Endothelial cell of umbilical vein (primary cell): ENCODE measurements at regions of chr18 and their contacts with region 1.

Region 1: DNA sequence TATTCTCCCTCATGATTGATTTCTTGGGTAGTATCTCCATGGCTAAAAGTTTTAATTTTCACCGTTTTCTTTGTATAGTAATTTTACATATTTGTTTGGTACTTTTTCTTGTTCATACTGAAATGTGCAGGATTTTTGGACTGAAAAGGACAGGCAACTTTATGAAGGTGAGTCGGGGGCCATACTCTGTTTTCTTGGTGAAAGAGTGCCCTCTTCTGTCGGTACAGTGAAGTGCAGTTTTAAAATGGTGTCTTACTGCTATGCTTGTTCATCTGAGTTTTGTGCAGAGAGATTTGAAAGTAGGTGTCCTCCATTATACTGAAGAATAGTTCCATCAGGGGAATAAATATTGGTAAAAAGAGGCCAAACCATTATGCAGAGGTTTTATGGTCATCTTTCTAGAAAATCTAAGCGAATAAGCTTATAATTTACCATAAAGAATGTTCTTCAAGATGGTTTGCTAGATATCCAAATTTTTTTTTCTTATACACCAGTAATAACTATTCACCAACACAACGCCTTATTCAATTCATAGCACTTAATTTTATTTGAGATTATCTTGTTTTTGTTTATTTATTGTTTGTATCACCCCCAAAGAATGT is 8.7 kb upstream of the SERPINB13 start:
- DNase-seq: peak; percentile 53
- H3K4me3 ChIP-seq: no peak overlapping the region
- H3K27ac ChIP-seq: no peak overlapping the region
- H3K4me1 ChIP-seq: no peaks in the 10 kb centered on the region
- H3K27me3 ChIP-seq: no peaks in the 10 kb centered on the region
- CTCF ChIP-seq: peak; percentile 52 to 63
- POLR2A ChIP-seq: no peak

Region 2: GRCh38 chr18:63511286-63511685 is 67.2 kb before region 1 on chr18:
- CTCF ChIA-PET with region 1: interaction called, 21 read pairs
- POLR2A ChIA-PET with region 1: no interaction called
- dilution Hi-C with region 1: no loop called
- intact Hi-C with region 1: no loop called
- DNase-seq: peak; percentile 33
- H3K4me3 ChIP-seq: no peak overlapping the region
- H3K27ac ChIP-seq: no peak overlapping the region
- H3K4me1 ChIP-seq: no peaks in the 10 kb centered on the region
- H3K27me3 ChIP-seq: peaks cover 5 to 11% of the 10 kb centered on the region in 2 experiments
- CTCF ChIP-seq: peak; percentile 52 to 56
- POLR2A ChIP-seq: no peak

Region 3: DNA sequence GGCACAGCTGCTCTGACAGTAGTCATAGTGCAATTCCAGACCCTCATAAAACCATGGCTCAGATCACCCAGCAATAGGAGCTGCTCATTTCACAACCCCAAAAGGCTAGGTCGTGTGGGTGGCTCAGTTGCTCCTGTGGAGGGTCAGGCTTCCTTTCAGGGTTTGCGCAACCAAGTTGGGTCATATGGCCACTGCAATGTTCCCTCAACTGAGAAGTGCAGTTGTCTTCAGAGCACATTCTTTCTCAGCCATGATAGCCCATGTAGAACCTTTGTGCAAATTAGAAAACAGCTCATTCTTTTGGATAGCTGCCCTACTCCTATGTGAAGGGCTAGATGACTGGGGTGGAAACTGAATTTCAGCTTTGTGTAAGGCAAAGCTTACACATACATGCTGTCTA is 11.9 kb after region 1 on chr18:
- CTCF ChIA-PET with region 1: interaction called, 13 read pairs
- POLR2A ChIA-PET with region 1: no interaction called
- dilution Hi-C with region 1: no loop called
- intact Hi-C with region 1: no loop called
- DNase-seq: no peak
- H3K4me3 ChIP-seq: no peak overlapping the region
- H3K27ac ChIP-seq: no peak overlapping the region
- H3K4me1 ChIP-seq: no peaks in the 10 kb centered on the region
- H3K27me3 ChIP-seq: no peaks in the 10 kb centered on the region
- CTCF ChIP-seq: no peak
- POLR2A ChIP-seq: no peak